ENCODE measurements at regions of chr12 and their contacts with region 1.

Region 1: DNA sequence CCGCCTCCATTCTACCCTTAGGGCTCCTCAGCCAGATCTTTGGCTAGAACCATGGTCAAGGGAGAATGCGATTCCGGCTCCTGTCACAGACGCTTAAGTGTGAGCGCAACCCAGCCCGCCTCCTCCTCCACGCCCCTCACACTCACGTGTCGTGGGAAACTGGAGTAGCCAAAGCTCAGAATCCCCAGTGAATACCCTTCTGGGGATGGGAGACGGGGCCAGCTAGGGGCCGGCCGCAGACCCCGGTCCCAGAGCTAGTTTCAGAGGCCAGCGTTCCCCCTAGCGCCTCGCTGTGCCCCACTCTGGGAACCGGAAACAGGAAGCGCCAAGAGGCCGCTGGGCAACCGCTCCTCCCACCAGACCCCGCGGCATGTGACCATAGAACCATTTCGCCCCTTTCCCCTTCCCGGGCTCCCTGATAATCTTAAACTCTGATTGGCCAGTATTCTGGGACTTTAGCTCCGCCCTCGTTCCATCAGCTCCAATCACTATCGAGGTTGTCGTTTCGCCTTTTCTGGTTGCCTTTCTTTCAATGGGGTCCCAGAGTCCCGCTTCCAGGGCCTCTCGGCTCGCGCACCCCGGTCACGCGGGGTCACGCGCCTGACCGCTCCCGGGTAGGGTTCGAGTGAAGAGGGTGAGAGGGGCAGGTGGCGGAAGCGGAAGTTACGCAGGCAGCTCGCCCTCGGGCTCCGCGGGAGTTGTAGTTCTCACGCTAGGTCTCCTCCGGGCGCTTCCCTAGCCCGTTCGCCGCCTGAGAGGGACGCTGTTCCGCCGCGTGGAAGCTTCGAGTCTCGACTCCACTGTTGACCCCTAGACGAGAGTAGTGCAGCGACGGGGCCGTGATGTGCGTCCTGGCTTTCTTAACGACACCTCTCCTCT is at the start of gene M6PR:
- DNase-seq: peak; percentile 96
- H3K4me3 Mint-ChIP-seq: peak within 1 kb of the TSS; percentile 99
- H3K27ac Mint-ChIP-seq: peak within 1 kb of the TSS; percentile 94
- H3K4me1 Mint-ChIP-seq: peaks cover 56% of the 10 kb centered on the region
- H3K27me3 Mint-ChIP-seq: no peaks in the 10 kb centered on the region
- total RNA-seq, gene M6PR: 150 to 164 TPM

Region 2: GRCh38 chr12:8493084-8493483 is 456.5 kb before region 1 on chr12:
- CTCF ChIA-PET with region 1: no interaction called
- POLR2A ChIA-PET with region 1: no interaction called
- intact Hi-C with region 1: loop called (anchors 5 kb)
- DNase-seq: peak; percentile 79
- H3K4me3 Mint-ChIP-seq: no peak overlapping the region
- H3K27ac Mint-ChIP-seq: peak overlapping the region; percentile 56
- H3K4me1 Mint-ChIP-seq: peaks cover 24% of the 10 kb centered on the region
- H3K27me3 Mint-ChIP-seq: peaks cover 3% of the 10 kb centered on the region

Region 3: GRCh38 chr12:8697476-8698131 is 252.0 kb before region 1 on chr12 and contains the start of gene RIMKLB:
- CTCF ChIA-PET with region 1: no interaction called
- POLR2A ChIA-PET with region 1: no interaction called
- intact Hi-C with region 1: loop called (anchors 1 kb)
- DNase-seq: peak; percentile 76
- H3K4me3 Mint-ChIP-seq: peak within 1 kb of the TSS; percentile 92
- H3K27ac Mint-ChIP-seq: peak within 1 kb of the TSS; percentile 69
- H3K4me1 Mint-ChIP-seq: peaks cover 11% of the 10 kb centered on the region
- H3K27me3 Mint-ChIP-seq: no peaks in the 10 kb centered on the region
- total RNA-seq, gene RIMKLB: 4.6 to 4.9 TPM

Region 4: GRCh38 chr12:8969861-8970412 is 20.4 kb after region 1 on chr12:
- CTCF ChIA-PET with region 1: no interaction called
- POLR2A ChIA-PET with region 1: no interaction called
- intact Hi-C with region 1: no loop called
- DNase-seq: no peak
- H3K4me3 Mint-ChIP-seq: no peak overlapping the region
- H3K27ac Mint-ChIP-seq: no peak overlapping the region
- H3K4me1 Mint-ChIP-seq: peaks cover 11% of the 10 kb centered on the region
- H3K27me3 Mint-ChIP-seq: no peaks in the 10 kb centered on the region

Region 5: GRCh38 chr12:8989413-8989812 is 39.8 kb after region 1 on chr12 and contains the start of gene KLRG1:
- CTCF ChIA-PET with region 1: interaction called, 40 read pairs
- POLR2A ChIA-PET with region 1: interaction called, 8 read pairs
- intact Hi-C with region 1: loop called (anchors 1 kb)
- DNase-seq: peak; percentile 51
- H3K4me3 Mint-ChIP-seq: peak within 1 kb of the TSS; percentile 64
- H3K27ac Mint-ChIP-seq: peak within 1 kb of the TSS; percentile 63
- H3K4me1 Mint-ChIP-seq: peaks cover 61% of the 10 kb centered on the region
- H3K27me3 Mint-ChIP-seq: no peaks in the 10 kb centered on the region
- total RNA-seq, gene KLRG1: 4.4 to 5.4 TPM

Region 6: GRCh38 chr12:9027161-9028059 is 77.8 kb after region 1 on chr12:
- CTCF ChIA-PET with region 1: interaction called, 39 read pairs
- POLR2A ChIA-PET with region 1: interaction called, 12 read pairs
- intact Hi-C with region 1: loop called (anchors 1 kb)
- DNase-seq: peak; percentile 74
- H3K4me3 Mint-ChIP-seq: peak overlapping the region; percentile 64
- H3K27ac Mint-ChIP-seq: peak overlapping the region; percentile 87
- H3K4me1 Mint-ChIP-seq: peaks cover 36% of the 10 kb centered on the region
- H3K27me3 Mint-ChIP-seq: peaks cover 2% of the 10 kb centered on the region

Region 7: DNA sequence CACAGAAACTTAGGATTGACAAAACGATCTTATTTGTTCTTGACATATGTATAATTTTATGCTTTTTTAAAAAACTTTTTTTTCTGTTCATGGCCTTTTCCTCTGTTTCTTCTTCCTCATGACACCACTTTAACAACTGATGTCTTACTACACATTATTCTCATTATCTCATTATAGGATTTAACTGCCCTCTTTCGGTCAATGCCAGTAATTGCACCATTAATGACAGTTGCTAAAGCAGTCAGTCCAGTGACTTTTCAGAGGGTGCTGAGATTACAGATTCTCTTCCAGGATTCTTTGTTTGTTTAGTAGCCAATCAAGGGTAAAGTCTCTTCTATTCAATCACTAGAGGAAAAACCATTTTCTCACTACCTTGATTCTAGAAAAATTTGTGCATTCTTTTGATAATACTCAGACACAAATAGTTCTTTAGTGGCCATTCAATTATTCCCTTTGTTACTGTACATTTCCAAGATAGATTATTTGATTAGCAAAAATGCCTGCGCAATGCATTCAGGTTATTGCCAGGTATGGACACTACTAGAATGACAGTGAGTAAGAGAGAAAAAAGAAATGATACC is 89.9 kb after region 1 on chr12:
- CTCF ChIA-PET with region 1: interaction called, 135 read pairs
- POLR2A ChIA-PET with region 1: interaction called, 5 read pairs
- intact Hi-C with region 1: loop called (anchors 1 kb)
- DNase-seq: no peak
- H3K4me3 Mint-ChIP-seq: no peak overlapping the region
- H3K27ac Mint-ChIP-seq: no peak overlapping the region
- H3K4me1 Mint-ChIP-seq: peaks cover 60% of the 10 kb centered on the region
- H3K27me3 Mint-ChIP-seq: no peaks in the 10 kb centered on the region